A549 (cell line): ENCODE measurements at regions of chr19 and their contacts with region 1.

Region 1: GRCh38 chr19:40662921-40663694 is 27.3 kb downstream of the NUMBL start:
- DNase-seq: peak; percentile 95 to 97
- ATAC-seq: peak; percentile 79 to 87
- H3K4me3 ChIP-seq: peak overlapping the region; percentile 57
- H3K27ac ChIP-seq: peak overlapping the region; percentile 81 to 83
- H3K4me1 ChIP-seq: peaks cover 39% of the 10 kb centered on the region
- CTCF ChIP-seq: peak; percentile 100
- EP300 ChIP-seq: no peak
- POLR2A ChIP-seq: peak; percentile 50
- RAD21 ChIP-seq: peak; percentile 100

Region 2: GRCh38 chr19:40517248-40517647 is 145.9 kb before region 1 on chr19:
- CTCF ChIA-PET with region 1: no interaction called
- POLR2A ChIA-PET with region 1: no interaction called
- DNase-seq: no peak
- ATAC-seq: no peak
- H3K4me3 ChIP-seq: no peak overlapping the region
- H3K27ac ChIP-seq: no peak overlapping the region
- H3K4me1 ChIP-seq: peaks cover 9% of the 10 kb centered on the region
- CTCF ChIP-seq: no peak
- EP300 ChIP-seq: no peak
- POLR2A ChIP-seq: no peak
- RAD21 ChIP-seq: no peak

Region 3: GRCh38 chr19:40640744-40641143 is 22.4 kb before region 1 on chr19:
- CTCF ChIA-PET with region 1: interaction called, 174 read pairs
- POLR2A ChIA-PET with region 1: interaction called, 10 read pairs
- DNase-seq: peak in 1 of 2 experiments; percentile 70
- ATAC-seq: peak; percentile 53 to 64
- H3K4me3 ChIP-seq: no peak overlapping the region
- H3K27ac ChIP-seq: peak overlapping the region; percentile 72 to 84
- H3K4me1 ChIP-seq: peaks cover 34% of the 10 kb centered on the region
- CTCF ChIP-seq: no peak
- EP300 ChIP-seq: no peak
- POLR2A ChIP-seq: no peak
- RAD21 ChIP-seq: no peak

Region 4: GRCh38 chr19:40690693-40691420 is 27.7 kb after region 1 on chr19:
- CTCF ChIA-PET with region 1: interaction called, 39 read pairs
- POLR2A ChIA-PET with region 1: interaction called, 15 read pairs
- DNase-seq: peak; percentile 98 to 100
- ATAC-seq: peak; percentile 60 to 89
- H3K4me3 ChIP-seq: peak overlapping the region; percentile 73
- H3K27ac ChIP-seq: peak overlapping the region; percentile 93 to 99
- H3K4me1 ChIP-seq: peaks cover 42% of the 10 kb centered on the region
- CTCF ChIP-seq: no peak
- EP300 ChIP-seq: peak in 1 of 2 experiments; percentile 20; a peak in 1 of 5 replicates
- POLR2A ChIP-seq: peak; percentile 79
- RAD21 ChIP-seq: no peak; a peak in 1 of 5 replicates

Region 5: GRCh38 chr19:40721936-40722661 is 59.0 kb after region 1 on chr19:
- CTCF ChIA-PET with region 1: interaction called, 23 read pairs
- POLR2A ChIA-PET with region 1: interaction called, 15 read pairs
- DNase-seq: no peak
- ATAC-seq: no peak
- H3K4me3 ChIP-seq: no peak overlapping the region
- H3K27ac ChIP-seq: peak overlapping the region in 1 of 2 experiments; percentile 12; a peak in 1 of 6 replicates
- H3K4me1 ChIP-seq: peaks cover 33% of the 10 kb centered on the region
- CTCF ChIP-seq: no peak
- EP300 ChIP-seq: no peak
- POLR2A ChIP-seq: no peak
- RAD21 ChIP-seq: no peak

Region 6: GRCh38 chr19:40768869-40769268 is 105.8 kb after region 1 on chr19:
- CTCF ChIA-PET with region 1: interaction called, 18 read pairs
- POLR2A ChIA-PET with region 1: interaction called, 3 read pairs
- DNase-seq: no peak
- ATAC-seq: peak; percentile 4 to 9; a peak in 2 of 6 replicates
- H3K4me3 ChIP-seq: no peak overlapping the region
- H3K27ac ChIP-seq: no peak overlapping the region
- H3K4me1 ChIP-seq: no peaks in the 10 kb centered on the region
- CTCF ChIP-seq: no peak
- EP300 ChIP-seq: no peak
- POLR2A ChIP-seq: no peak
- RAD21 ChIP-seq: no peak

Region 7: DNA sequence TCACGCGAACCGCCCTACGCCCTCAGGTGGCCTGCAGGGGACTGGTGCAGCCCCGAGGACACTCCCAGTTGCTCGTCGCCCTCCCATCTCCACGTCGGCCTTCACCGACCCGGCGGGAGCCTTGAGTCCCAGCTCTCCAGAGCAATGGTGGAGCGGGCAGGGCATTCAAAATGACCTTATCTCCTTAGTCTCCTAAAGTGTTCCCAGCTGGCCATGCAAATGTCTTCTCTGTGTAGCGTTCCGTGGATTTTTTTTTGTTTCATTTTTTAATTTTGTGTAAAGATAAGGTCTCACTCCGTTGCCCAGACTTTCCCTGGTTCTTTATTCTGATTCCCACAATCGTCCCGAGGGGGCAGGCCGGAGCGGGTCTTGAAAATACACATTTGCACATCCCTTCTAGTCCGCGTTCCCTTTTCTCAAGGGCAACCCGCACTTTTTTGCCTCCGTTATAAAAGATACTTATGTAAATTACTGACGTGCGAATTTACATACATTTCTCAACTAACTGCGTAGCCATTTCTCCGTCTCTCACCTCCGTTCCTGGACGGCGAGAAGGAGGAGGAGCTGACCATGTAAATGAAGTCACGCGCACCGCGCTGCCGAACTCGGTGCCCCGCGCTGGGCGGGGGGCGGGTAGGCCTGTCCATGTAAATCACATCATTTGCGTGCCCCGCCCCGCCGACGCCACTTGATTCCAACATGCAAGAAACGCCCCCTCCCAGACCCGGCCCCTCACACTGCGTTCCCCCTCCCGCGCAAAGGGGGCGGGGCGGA is 135.3 kb after region 1 on chr19:
- CTCF ChIA-PET with region 1: interaction called, 162 read pairs
- POLR2A ChIA-PET with region 1: interaction called, 6 read pairs
- DNase-seq: peak; percentile 99 to 100
- ATAC-seq: peak; percentile 86 to 92
- H3K4me3 ChIP-seq: peak overlapping the region; percentile 84
- H3K27ac ChIP-seq: peak overlapping the region; percentile 95 to 96
- H3K4me1 ChIP-seq: peaks cover 42% of the 10 kb centered on the region
- CTCF ChIP-seq: peak; percentile 67
- EP300 ChIP-seq: no peak
- POLR2A ChIP-seq: 0 out of 2 replicates have a peak, but pooled peaks have one; percentile 23
- RAD21 ChIP-seq: 0 out of 5 replicates have a peak, but pooled peaks have one; percentile 11 to 33

Region 8: GRCh38 chr19:41144403-41144802 is 481.3 kb after region 1 on chr19:
- CTCF ChIA-PET with region 1: interaction called, 44 read pairs
- POLR2A ChIA-PET with region 1: no interaction called
- DNase-seq: peak; percentile 85 to 94
- ATAC-seq: peak; percentile 94
- H3K4me3 ChIP-seq: no peak overlapping the region
- H3K27ac ChIP-seq: no peak overlapping the region; a peak in 1 of 6 replicates
- H3K4me1 ChIP-seq: no peaks in the 10 kb centered on the region
- CTCF ChIP-seq: peak; percentile 99
- EP300 ChIP-seq: no peak
- POLR2A ChIP-seq: no peak
- RAD21 ChIP-seq: peak; percentile 99 to 100